Stomach (tissue), 19 donors: ENCODE measurements at regions of chr10 and their contacts with region 1.

Region 1: GRCh38 chr10:68156373-68157185 is 47.3 kb downstream of the MYPN start:
- DNase-seq: peak; percentile 73 to 89
- H3K4me3 ChIP-seq: no peak overlapping the region
- H3K27ac ChIP-seq: no peak overlapping the region
- H3K4me1 ChIP-seq: peaks cover 9 to 22% (median 18%) of the 10 kb centered on the region in 4 donors
- H3K27me3 ChIP-seq: no peaks in the 10 kb centered on the region
- CTCF ChIP-seq: peak in 5 of 7 experiments; percentile 60 to 89 (median 79)
- EP300 ChIP-seq: no peak
- POLR2A ChIP-seq: no peak

Region 2: DNA sequence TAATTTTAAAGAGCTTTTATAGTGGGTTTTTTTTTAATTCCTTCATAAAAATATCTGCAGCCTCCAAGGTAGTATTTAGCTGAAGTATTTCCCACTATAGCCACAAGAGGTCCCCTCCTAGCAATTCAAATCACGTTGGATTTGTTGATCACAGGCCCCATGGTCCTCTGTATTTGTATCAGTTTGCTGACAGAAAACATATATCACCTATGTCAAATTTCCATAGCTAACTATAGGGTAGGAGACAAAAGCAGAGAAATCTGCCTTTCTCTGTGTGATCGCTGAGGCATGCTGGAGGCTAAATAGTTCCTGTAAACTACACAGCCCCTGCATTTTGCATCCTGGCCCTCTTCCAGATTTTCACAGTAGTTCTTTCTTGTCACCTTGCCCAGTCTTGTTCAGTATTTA is 458.9 kb before region 1 on chr10:
- intact Hi-C with region 1: no loop called
- DNase-seq: peak in 1 of 2 donors; percentile 71
- H3K4me3 ChIP-seq: no peak overlapping the region
- H3K27ac ChIP-seq: no peak overlapping the region
- H3K4me1 ChIP-seq: peaks cover 0 to 15% (median 5%) of the 10 kb centered on the region in 4 donors
- H3K27me3 ChIP-seq: no peaks in the 10 kb centered on the region
- CTCF ChIP-seq: peak in 5 of 7 experiments; percentile 25 to 70 (median 65)
- EP300 ChIP-seq: no peak
- POLR2A ChIP-seq: no peak

Region 3: DNA sequence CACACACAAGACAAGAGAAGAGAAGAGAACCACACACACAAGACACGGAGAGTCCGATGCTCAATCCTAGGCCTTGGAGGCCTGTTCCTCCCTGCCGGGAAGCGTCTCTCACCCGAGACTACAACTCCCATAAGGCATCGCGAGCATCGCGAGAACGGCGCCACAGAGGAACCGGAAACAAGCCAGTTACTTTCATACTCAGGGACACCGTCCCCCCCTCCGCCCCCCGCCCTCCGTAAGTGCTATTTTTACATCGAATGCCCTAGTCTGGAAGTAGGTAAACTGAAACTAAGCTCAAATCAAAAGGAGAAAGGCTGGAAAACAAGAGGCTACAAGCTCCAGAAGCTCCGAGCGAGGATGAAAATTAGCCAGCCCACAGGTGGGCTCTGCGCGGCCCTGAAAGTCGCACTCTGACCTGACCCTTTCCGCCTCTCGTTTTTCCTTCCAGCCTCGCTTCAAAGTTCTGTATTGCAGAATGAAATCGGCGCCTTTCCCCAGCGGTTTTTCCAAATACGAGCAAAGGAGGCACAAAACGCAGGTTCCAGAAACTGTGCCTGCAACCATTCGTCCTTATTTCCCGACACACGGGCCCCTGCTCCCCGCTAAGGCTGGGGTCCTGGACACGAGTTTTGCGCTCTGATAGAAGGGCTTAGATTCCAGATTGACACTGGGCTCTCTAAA is 307.1 kb before region 1 on chr10:
- intact Hi-C with region 1: loop called (anchors 10 kb)
- DNase-seq: peak; percentile 94 to 97
- H3K4me3 ChIP-seq: peak overlapping the region; percentile 55 to 83 (median 69)
- H3K27ac ChIP-seq: peak overlapping the region; percentile 86 to 98 (median 94)
- H3K4me1 ChIP-seq: peaks cover 4 to 14% (median 9%) of the 10 kb centered on the region in 4 donors
- H3K27me3 ChIP-seq: no peaks in the 10 kb centered on the region
- CTCF ChIP-seq: no peak
- EP300 ChIP-seq: no peak
- POLR2A ChIP-seq: peak in 1 of 4 donors; percentile 42

Region 4: GRCh38 chr10:68082872-68083271 is 73.7 kb before region 1 on chr10:
- intact Hi-C with region 1: loop called (anchors 5 kb)
- DNase-seq: peak in 1 of 2 donors; percentile 47
- H3K4me3 ChIP-seq: no peak overlapping the region
- H3K27ac ChIP-seq: no peak overlapping the region
- H3K4me1 ChIP-seq: peaks cover 0 to 2% (median 0%) of the 10 kb centered on the region in 4 donors
- H3K27me3 ChIP-seq: peaks cover 0 to 4% (median 0%) of the 10 kb centered on the region in 3 donors
- CTCF ChIP-seq: peak in 3 of 7 experiments; percentile 13 to 43 (median 26)
- EP300 ChIP-seq: no peak
- POLR2A ChIP-seq: no peak

Region 5: DNA sequence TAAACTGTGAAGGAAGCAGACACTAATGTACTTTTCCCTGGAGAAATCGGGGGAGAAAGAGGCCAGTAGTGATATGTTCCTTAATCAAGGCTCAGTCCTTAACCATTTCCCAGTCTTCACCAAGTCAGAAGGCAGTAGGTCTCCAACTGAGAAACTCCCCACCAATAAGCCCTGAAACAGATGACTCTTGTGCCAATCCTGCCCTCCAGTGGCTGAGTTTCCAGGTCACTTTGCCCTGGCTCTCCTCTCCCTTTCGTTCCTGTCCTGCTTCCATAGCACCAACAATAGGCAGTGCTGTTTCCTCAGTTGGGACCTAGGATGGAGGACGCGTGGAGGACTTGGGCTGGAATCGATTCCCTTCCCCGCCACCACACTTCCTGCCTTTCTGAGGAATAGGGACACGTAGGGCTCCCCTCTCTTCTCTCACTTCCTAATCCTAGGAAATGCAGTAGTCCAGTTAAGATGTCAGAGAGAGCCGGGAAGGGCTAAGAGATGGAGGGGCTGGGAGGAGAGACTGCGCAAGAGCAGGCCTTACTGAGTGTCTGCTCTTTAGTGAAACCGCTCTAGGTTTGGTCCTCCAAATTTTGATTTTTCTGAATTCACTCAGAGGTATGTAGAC is 52.0 kb after region 1 on chr10:
- intact Hi-C with region 1: no loop called
- DNase-seq: peak; percentile 72 to 81
- H3K4me3 ChIP-seq: no peak overlapping the region
- H3K27ac ChIP-seq: no peak overlapping the region
- H3K4me1 ChIP-seq: no peaks in the 10 kb centered on the region
- H3K27me3 ChIP-seq: no peaks in the 10 kb centered on the region
- CTCF ChIP-seq: peak in 4 of 7 experiments; percentile 24 to 58 (median 41)
- EP300 ChIP-seq: no peak
- POLR2A ChIP-seq: no peak

Region 6: DNA sequence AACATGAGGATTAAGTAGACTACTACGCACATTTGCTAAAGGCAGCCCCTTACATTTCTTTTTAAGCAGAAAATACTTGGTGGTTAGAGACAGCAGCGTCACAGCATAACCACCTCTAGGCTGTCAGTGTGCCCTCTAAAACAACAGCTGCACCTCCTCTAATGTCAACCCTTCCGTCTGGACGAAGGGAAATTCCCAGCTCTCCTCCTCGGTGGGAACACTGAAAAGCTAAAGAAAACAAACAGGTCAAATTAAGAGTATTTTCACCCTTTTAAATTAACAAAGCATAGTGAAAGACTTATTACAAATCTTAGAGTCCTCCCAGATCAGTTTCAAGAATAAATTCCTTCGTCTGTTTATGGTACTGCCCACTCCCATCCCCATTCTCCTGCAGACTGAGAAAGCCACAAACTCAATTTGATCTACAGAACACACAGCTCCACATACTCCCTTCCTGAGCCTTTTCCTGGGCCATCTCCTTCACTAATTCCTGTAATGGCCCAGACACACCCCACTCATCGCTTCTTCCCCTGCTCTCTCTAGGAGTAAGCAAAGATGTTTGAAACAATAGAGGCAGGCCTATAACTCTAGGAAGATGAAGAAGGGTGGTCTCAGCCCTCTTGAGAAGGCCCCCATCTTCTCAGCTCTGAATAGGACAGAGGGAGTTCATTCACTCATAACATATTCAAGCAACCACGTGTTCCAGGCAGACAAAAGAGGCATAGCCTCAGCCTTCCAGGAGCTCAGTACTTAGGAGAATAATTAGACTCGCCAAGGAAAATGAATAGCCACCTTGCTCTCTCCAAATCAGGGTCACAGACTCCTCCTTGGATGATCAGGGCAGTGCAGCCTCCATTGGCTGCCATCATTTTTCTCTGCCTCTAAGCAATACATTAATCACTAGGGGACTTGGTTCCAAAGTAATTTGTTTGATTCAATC is 127.8 kb after region 1 on chr10:
- intact Hi-C with region 1: no loop called
- DNase-seq: no peak
- H3K4me3 ChIP-seq: no peak overlapping the region
- H3K27ac ChIP-seq: no peak overlapping the region
- H3K4me1 ChIP-seq: no peaks in the 10 kb centered on the region
- H3K27me3 ChIP-seq: no peaks in the 10 kb centered on the region
- CTCF ChIP-seq: no peak
- EP300 ChIP-seq: no peak
- POLR2A ChIP-seq: no peak

Region 7: GRCh38 chr10:68331455-68332258 is 175.1 kb after region 1 on chr10 and contains the start of gene HNRNPH3:
- intact Hi-C with region 1: no loop called
- DNase-seq: peak; percentile 99 to 100
- H3K4me3 ChIP-seq: peak within 1 kb of the TSS; percentile 85 to 98 (median 94)
- H3K27ac ChIP-seq: peak within 1 kb of the TSS; percentile 93 to 100 (median 99)
- H3K4me1 ChIP-seq: peaks cover 29 to 66% (median 49%) of the 10 kb centered on the region in 4 donors
- H3K27me3 ChIP-seq: no peaks in the 10 kb centered on the region
- CTCF ChIP-seq: peak in 1 of 7 experiments; percentile 14
- EP300 ChIP-seq: no peak
- POLR2A ChIP-seq: peak in 2 of 4 donors; percentile 97 to 99
- total RNA-seq, gene HNRNPH3: 29.8 to 206 (median 65.2) TPM